Gastrocnemius medialis (tissue), 4 donors: ENCODE measurements at regions of chr18 and their contacts with region 1.

Region 1: DNA sequence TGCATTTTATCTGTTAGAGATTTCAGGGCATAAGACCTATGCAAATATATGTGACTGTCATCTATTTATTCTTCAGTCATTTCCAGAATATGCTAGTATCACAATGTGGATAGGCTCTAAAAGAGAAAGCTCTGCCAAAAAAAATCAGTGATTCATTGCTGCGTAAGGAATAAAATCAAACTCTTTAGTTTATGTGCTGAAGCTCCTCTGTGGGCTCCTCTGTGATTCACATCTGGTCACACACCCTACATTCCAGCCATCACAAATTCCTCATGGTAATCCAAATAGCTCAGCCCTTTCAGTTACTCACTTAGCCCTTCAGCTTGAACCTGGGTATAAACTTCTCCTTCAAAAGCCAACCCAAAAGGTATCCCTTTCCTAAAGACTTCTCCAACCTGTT is 21.4 kb downstream of the DLGAP1 start:
- DNase-seq: no peak
- ATAC-seq: no peak
- H3K4me3 ChIP-seq: no peak overlapping the region
- H3K27ac ChIP-seq: no peak overlapping the region
- H3K4me1 ChIP-seq: no peaks in the 10 kb centered on the region
- H3K27me3 ChIP-seq: no peaks in the 10 kb centered on the region
- CTCF ChIP-seq: no peak
- POLR2A ChIP-seq: no peak

Region 2: GRCh38 chr18:4544134-4544533 is 110.4 kb after region 1 on chr18:
- in situ Hi-C with region 1: loop called in 2 of 4 experiments (anchors 25 kb)
- intact Hi-C with region 1: no loop called
- DNase-seq: no peak
- ATAC-seq: no peak
- H3K4me3 ChIP-seq: no peak overlapping the region
- H3K27ac ChIP-seq: no peak overlapping the region
- H3K4me1 ChIP-seq: no peaks in the 10 kb centered on the region
- H3K27me3 ChIP-seq: no peaks in the 10 kb centered on the region
- CTCF ChIP-seq: no peak
- POLR2A ChIP-seq: no peak

Region 3: GRCh38 chr18:4854671-4855070 is 421.0 kb after region 1 on chr18:
- in situ Hi-C with region 1: no loop called
- intact Hi-C with region 1: no loop called
- DNase-seq: no peak
- ATAC-seq: no peak
- H3K4me3 ChIP-seq: no peak overlapping the region
- H3K27ac ChIP-seq: no peak overlapping the region
- H3K4me1 ChIP-seq: no peaks in the 10 kb centered on the region
- H3K27me3 ChIP-seq: no peaks in the 10 kb centered on the region
- CTCF ChIP-seq: no peak
- POLR2A ChIP-seq: no peak